ENCODE measurements at regions of chr2 and their contacts with region 1.

Region 1: GRCh38 chr2:85551698-85552678 is 9.3 kb downstream of the GGCX start:
- DNase-seq: peak; percentile 71 to 88
- H3K4me3 ChIP-seq: no peak overlapping the region
- H3K4me1 ChIP-seq: no peaks in the 10 kb centered on the region
- H3K27me3 ChIP-seq: no peaks in the 10 kb centered on the region

Region 2: GRCh38 chr2:85418132-85419008 is 133.6 kb before region 1 on chr2 and contains the start of gene SH2D6:
- in situ Hi-C with region 1: loop called (anchors 5 kb)
- DNase-seq: peak; percentile 73 to 90
- H3K4me3 ChIP-seq: peak within 1 kb of the TSS; percentile 65
- H3K4me1 ChIP-seq: peaks cover 24% of the 10 kb centered on the region
- H3K27me3 ChIP-seq: no peaks in the 10 kb centered on the region

Region 3: DNA sequence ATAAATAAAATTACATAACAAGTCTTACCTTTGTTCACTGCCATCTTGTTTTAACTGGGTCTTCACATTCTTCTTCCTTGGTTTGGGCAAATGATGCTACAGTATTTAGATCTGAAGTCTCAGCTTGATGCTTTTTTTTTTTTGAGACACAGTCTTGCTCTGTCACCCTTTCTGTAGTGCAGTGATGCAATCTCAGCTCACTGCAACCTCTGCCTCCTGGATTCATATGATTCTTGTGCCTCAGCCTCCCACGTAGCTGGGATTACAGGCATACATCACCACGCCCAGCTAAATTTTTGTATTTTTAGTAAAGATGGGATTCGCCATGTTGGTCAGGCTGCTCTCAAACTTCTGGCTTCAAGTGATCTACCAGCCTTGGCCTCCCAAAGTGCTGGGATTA is 66.2 kb before region 1 on chr2:
- in situ Hi-C with region 1: no loop called
- DNase-seq: no peak
- H3K4me3 ChIP-seq: no peak overlapping the region
- H3K4me1 ChIP-seq: no peaks in the 10 kb centered on the region
- H3K27me3 ChIP-seq: no peaks in the 10 kb centered on the region

Region 4: DNA sequence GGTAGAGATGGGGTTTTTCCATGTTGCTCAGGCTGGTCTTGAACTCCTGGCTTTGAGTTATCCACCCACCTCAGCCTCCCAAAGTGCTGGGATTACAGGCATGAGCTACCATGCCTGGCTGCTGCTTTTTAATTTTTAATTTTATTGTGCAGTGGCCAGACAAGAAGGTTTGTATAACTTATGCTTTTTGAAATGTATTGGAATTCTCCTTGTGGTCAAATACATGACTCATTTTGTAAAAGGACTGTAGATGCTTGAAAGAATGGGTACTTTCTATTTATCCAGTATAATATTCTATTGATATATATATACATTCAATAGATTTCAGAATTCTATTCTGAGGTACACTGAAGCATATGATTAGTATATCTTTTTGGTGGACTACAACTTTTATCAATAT is 419.4 kb after region 1 on chr2:
- in situ Hi-C with region 1: no loop called
- DNase-seq: no peak
- H3K4me3 ChIP-seq: no peak overlapping the region
- H3K4me1 ChIP-seq: no peaks in the 10 kb centered on the region
- H3K27me3 ChIP-seq: no peaks in the 10 kb centered on the region

Measured in HAP-1 (cell line).